ENCODE measurements at regions of chr12 and their contacts with region 1.

Region 1: DNA sequence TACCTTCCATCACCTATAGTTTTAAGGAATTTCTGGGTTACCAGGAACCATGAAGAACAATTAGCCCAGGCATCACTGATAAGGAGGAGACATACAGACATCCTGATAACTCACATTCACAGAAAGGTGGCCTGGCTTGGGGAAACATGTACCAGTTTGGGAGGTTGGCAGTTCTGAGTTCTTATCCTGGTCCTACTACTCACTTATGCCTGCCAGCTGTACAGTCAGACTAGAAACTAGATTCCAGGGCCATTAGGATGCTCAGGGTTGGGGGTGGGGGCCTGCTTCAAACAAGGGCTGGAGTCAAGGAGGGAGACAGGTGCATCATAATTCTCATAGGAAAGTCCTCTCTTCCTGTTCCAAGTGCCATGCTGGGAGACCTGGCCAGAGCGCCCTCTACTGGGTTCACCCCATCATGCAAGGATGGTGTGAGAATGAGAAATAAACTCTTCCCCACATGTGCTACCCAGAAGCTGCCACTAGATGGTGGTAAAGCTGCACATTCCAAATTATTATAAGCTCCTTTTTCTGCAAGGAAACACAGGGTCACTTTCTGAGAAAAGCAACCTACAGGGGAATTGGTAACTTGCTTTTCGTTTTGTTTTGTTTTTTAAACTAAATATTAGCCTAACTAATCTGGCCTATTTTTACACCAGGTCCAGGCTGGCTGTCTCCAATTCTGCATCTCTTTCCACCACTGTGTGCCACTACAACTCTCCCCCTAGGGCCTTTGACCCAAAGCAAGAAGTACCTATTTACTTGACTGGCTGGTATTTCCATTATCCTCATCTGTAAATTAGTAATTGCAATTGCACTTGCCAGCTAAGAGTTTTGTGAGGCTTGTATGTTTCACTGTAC is 14.5 kb downstream of the OAS2 start:
- DNase-seq: peak; percentile 75 to 77
- ATAC-seq: peak; percentile 69 to 87; a peak in 4 of 6 replicates
- H3K4me3 ChIP-seq: no peak overlapping the region
- H3K27ac ChIP-seq: no peak overlapping the region
- H3K4me1 ChIP-seq: no peaks in the 10 kb centered on the region
- CTCF ChIP-seq: peak; percentile 81
- EP300 ChIP-seq: no peak
- POLR2A ChIP-seq: no peak
- RAD21 ChIP-seq: peak; percentile 81 to 92

Region 2: GRCh38 chr12:112978163-112979040 is 14.4 kb before region 1 on chr12 and contains the start of gene OAS2:
- CTCF ChIA-PET with region 1: interaction called, 11 read pairs
- POLR2A ChIA-PET with region 1: no interaction called
- DNase-seq: no peak
- ATAC-seq: peak; percentile 63 to 71
- H3K4me3 ChIP-seq: no peak within 1 kb of the TSS
- H3K27ac ChIP-seq: peak within 1 kb of the TSS in 1 of 2 experiments; percentile 14; a peak in 1 of 6 replicates
- H3K4me1 ChIP-seq: no peaks in the 10 kb centered on the region
- CTCF ChIP-seq: no peak
- EP300 ChIP-seq: no peak
- POLR2A ChIP-seq: no peak
- RAD21 ChIP-seq: no peak
- polyA plus RNA-seq, gene OAS2: 0.19 and 0.36 TPM in 2 replicates

Region 3: GRCh38 chr12:113005754-113006153 is 13.0 kb after region 1 on chr12:
- CTCF ChIA-PET with region 1: interaction called, 12 read pairs
- POLR2A ChIA-PET with region 1: no interaction called
- DNase-seq: peak; percentile 20 to 33
- ATAC-seq: 0 out of 6 replicates have a peak, but pooled peaks of 1 of the 2 experiments have one; percentile 32
- H3K4me3 ChIP-seq: no peak overlapping the region
- H3K27ac ChIP-seq: no peak overlapping the region
- H3K4me1 ChIP-seq: peaks cover 10% of the 10 kb centered on the region; the same call in 1 of the 3 replicates
- CTCF ChIP-seq: peak; percentile 21; the same call in 1 of the 3 replicates
- EP300 ChIP-seq: no peak
- POLR2A ChIP-seq: no peak
- RAD21 ChIP-seq: 0 out of 5 replicates have a peak, but pooled peaks of 1 of the 2 experiments have one; percentile 25

Region 4: DNA sequence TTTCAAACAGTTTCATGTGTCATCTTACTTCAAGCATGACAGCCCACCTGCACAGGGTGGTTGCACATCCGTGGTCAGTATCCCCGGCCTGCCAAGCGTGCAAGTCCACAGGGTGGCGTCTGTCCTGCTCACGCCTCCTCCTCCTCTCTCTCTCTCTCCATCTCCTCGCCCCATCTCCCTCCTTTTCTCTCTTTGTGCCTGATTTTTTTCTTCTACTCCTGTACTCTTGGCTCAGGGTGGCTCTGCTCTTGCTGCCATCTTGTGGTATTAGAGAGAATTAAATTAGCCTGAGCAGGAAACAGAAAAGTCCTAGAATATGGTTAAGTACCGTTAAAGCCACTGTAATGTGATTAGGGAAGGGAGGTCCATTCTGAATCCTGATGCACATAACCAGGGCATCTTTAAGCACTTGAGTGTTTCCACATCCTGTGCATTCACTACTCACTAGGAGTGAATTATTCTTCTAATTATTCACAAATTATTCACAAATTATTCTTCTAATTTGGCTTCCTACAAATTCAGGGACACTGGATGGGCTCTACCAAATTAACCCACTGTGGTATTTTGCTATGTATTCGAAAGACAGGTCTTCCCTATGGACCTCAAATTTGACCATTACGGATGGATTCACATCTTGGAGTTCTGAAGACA is 38.2 kb after region 1 on chr12:
- CTCF ChIA-PET with region 1: interaction called, 33 read pairs
- POLR2A ChIA-PET with region 1: no interaction called
- DNase-seq: peak; percentile 72 to 88
- ATAC-seq: peak; percentile 87 to 98
- H3K4me3 ChIP-seq: no peak overlapping the region
- H3K27ac ChIP-seq: no peak overlapping the region
- H3K4me1 ChIP-seq: no peaks in the 10 kb centered on the region
- CTCF ChIP-seq: peak; percentile 88
- EP300 ChIP-seq: no peak
- POLR2A ChIP-seq: no peak
- RAD21 ChIP-seq: peak; percentile 81 to 83

Region 5: GRCh38 chr12:113098446-113098896 is 105.7 kb after region 1 on chr12:
- CTCF ChIA-PET with region 1: interaction called, 10 read pairs
- POLR2A ChIA-PET with region 1: no interaction called
- DNase-seq: peak; percentile 89 to 95
- ATAC-seq: peak; percentile 75 to 86
- H3K4me3 ChIP-seq: no peak overlapping the region
- H3K27ac ChIP-seq: peak overlapping the region; percentile 41 to 44; a peak in 3 of 6 replicates
- H3K4me1 ChIP-seq: peaks cover 5% of the 10 kb centered on the region; the same call in 2 of the 3 replicates
- CTCF ChIP-seq: peak; percentile 76
- EP300 ChIP-seq: no peak
- POLR2A ChIP-seq: no peak
- RAD21 ChIP-seq: peak; percentile 80 to 86

Region 6: GRCh38 chr12:113152835-113153814 is 160.4 kb after region 1 on chr12:
- CTCF ChIA-PET with region 1: interaction called, 16 read pairs
- POLR2A ChIA-PET with region 1: interaction called, 3 read pairs
- DNase-seq: peak; percentile 90 to 92
- ATAC-seq: peak; percentile 83 to 92
- H3K4me3 ChIP-seq: peak overlapping the region; percentile 43
- H3K27ac ChIP-seq: peak overlapping the region in 1 of 2 experiments; percentile 69; a peak in 2 of 6 replicates
- H3K4me1 ChIP-seq: peaks cover 6% of the 10 kb centered on the region; the same call in 1 of the 3 replicates
- CTCF ChIP-seq: peak; percentile 65
- EP300 ChIP-seq: no peak
- POLR2A ChIP-seq: no peak
- RAD21 ChIP-seq: peak; percentile 67 to 75

Measured in A549 (cell line).